ENCODE measurements at regions of chr13 and their contacts with region 1.

Region 1: GRCh38 chr13:49300739-49301589 is 53.2 kb downstream of the CDADC1 start:
- DNase-seq: peak; percentile 84
- H3K4me3 ChIP-seq: peak overlapping the region; percentile 57
- H3K27ac ChIP-seq: no peak overlapping the region
- H3K4me1 ChIP-seq: no peaks in the 10 kb centered on the region
- H3K27me3 ChIP-seq: no peaks in the 10 kb centered on the region

Region 2: DNA sequence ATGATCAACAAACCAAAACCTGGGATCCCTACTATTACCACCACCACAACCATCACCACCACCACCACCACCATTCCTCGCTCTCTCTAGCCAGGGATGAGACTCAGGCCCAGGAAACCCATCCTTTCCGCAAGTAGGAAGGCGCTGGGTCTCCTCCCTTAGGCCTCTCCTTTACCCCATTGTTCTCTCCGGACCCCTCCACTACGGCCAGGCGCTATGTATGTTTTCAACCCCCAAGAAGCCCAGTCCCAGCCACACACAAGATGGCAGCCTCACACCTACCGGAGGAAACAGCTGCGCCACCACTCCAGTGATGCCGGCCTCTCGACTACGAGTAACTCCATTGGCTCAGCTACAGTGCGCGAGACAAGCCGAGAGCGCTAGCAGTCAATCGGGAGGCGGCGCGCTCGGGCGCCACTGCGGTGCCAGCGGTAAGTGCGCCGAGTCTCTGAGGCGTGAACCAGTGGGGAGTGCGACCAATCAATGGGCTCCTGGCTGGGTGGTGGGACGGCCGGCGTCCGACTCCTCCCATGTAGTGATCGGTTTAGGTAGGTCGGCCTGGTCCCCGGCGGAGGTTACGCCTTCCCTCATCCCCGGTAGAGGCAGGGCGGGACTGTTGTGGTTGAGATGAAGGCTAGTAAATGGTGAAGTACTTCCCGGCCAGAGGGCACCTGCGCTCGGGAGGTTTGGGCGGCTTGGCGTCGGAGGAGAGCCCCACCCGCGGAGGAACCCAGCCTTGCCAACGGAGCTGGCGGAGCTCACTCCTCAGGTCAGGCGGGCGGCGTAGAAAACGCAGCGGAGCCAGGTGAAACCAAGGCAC is 142.9 kb after region 1 on chr13 and contains the starts of genes CAB39L and SETDB2:
- in situ Hi-C with region 1: loop called (anchors 5 kb)
- DNase-seq: peak; percentile 99
- H3K4me3 ChIP-seq: peak within 1 kb of the TSS; percentile 90
- H3K27ac ChIP-seq: peak within 1 kb of the TSS; percentile 86
- H3K4me1 ChIP-seq: peaks cover 20% of the 10 kb centered on the region
- H3K27me3 ChIP-seq: no peaks in the 10 kb centered on the region
- total RNA-seq, gene CAB39L: 7.3 and 10.5 TPM in 2 replicates
- total RNA-seq, gene SETDB2: 2.8 and 5.3 TPM in 2 replicates

Measured in GM23248 (cell line).